IMR-90 (cell line): ENCODE measurements at regions of chr11 and their contacts with region 1.

Region 1: DNA sequence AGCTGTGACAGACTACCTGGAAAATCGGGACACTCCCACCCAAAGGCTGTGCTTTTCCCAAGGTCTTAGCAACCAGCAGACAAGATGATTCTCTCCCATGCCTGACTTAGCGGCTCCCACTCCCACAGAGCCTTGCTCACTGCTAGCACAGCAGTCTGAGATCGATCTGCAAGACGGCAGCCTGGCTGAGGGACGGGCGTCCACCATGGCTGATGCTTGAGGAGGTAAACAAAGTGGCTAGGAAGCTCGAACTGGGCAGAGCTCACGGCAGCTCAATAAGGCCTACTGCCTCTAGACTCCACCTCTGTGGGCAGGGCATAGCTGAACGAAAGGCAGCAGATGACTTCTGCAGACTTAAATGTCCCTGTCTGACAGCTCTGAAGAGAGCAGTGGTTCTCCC is 84.9 kb downstream of the SMCO4 start:
- DNase-seq: no peak
- ATAC-seq: no peak
- H3K4me3 ChIP-seq: no peak overlapping the region
- H3K27ac ChIP-seq: no peak overlapping the region
- H3K4me1 ChIP-seq: no peaks in the 10 kb centered on the region
- H3K27me3 ChIP-seq: no peaks in the 10 kb centered on the region
- CTCF ChIP-seq: no peak
- POLR2A ChIP-seq: no peak
- RAD21 ChIP-seq: no peak

Region 2: DNA sequence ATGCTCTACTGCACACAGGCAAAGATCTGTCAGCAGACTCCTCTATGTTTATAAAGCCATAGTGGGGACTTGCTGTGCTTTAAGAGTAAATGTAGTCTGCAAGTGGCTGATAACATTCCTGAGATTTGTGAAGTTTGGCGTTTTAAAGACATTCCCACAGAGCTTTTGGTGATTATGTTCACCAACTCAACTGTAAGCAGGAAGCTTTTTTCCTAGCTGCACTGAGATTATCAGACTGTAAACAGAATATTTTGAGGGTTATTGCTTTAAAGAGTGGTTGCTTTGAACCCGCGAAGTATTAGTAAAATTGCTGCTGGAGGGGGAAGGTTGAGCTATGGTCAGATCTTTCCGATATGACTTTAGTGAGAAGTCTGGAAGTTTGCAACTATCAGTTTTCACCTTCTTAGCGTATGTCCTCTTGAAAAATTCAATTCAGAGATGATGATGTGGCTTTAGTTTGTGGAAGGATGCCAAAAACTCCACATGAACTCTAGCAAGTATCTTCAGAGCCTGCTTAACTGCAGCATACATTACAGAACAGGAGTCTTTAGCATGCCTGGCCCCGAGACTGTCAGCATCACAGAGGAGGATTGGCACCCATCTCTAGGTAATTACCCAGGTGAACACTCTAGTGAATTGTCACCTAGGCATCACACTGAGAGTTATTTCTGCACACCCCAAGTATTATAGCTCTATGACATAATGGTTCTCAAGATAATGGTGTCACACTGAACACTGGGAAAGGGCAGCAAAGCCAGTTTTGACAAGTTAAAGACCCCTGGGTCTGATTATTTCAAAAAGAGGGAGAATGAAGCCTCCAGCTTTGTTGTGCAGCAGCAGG is 398.9 kb before region 1 on chr11:
- CTCF ChIA-PET with region 1: no interaction called
- POLR2A ChIA-PET with region 1: no interaction called
- dilution Hi-C with region 1: no loop called
- in situ Hi-C with region 1: no loop called
- intact Hi-C with region 1: no loop called
- DNase-seq: peak; percentile 90
- ATAC-seq: peak; percentile 54
- H3K4me3 ChIP-seq: no peak overlapping the region
- H3K27ac ChIP-seq: peak overlapping the region; percentile 61; the same call in 1 of the 2 replicates
- H3K4me1 ChIP-seq: peaks cover 16% of the 10 kb centered on the region
- H3K27me3 ChIP-seq: no peaks in the 10 kb centered on the region
- CTCF ChIP-seq: no peak
- POLR2A ChIP-seq: no peak
- RAD21 ChIP-seq: no peak

Region 3: DNA sequence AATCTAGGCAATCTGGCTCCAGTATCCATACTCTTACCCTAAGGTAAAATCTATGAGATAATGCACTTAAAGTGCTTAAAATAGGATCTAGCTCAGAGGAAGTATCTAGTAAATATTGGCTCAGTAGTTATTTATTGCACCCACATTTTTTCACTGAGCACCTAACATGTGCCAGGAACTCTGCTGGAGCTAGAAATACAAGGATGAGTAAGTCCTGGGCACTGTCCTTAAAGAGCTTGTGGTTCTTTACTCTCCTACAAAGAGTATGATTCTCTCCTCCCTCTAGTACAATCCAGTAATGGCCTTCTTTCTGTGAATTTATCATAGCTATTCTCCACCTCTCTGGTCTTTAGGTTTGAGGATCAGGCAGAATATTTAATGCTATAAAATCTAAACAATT is 68.5 kb before region 1 on chr11:
- CTCF ChIA-PET with region 1: no interaction called
- POLR2A ChIA-PET with region 1: no interaction called
- dilution Hi-C with region 1: no loop called
- in situ Hi-C with region 1: no loop called
- intact Hi-C with region 1: loop called (anchors 2 kb)
- DNase-seq: no peak
- ATAC-seq: no peak
- H3K4me3 ChIP-seq: no peak overlapping the region
- H3K27ac ChIP-seq: no peak overlapping the region
- H3K4me1 ChIP-seq: no peaks in the 10 kb centered on the region
- H3K27me3 ChIP-seq: no peaks in the 10 kb centered on the region
- CTCF ChIP-seq: no peak
- POLR2A ChIP-seq: no peak
- RAD21 ChIP-seq: no peak

Region 4: GRCh38 chr11:93500759-93501158 is 42.5 kb after region 1 on chr11:
- CTCF ChIA-PET with region 1: no interaction called
- POLR2A ChIA-PET with region 1: no interaction called
- dilution Hi-C with region 1: no loop called
- in situ Hi-C with region 1: no loop called
- intact Hi-C with region 1: no loop called
- DNase-seq: no peak
- ATAC-seq: no peak
- H3K4me3 ChIP-seq: no peak overlapping the region
- H3K27ac ChIP-seq: no peak overlapping the region
- H3K4me1 ChIP-seq: 0 out of 2 replicates have a peak, but pooled peaks cover 2% of the 10 kb centered on the region
- H3K27me3 ChIP-seq: no peaks in the 10 kb centered on the region
- CTCF ChIP-seq: no peak
- POLR2A ChIP-seq: no peak
- RAD21 ChIP-seq: no peak

Region 5: GRCh38 chr11:93718057-93718563 is 259.8 kb after region 1 on chr11:
- CTCF ChIA-PET with region 1: no interaction called
- POLR2A ChIA-PET with region 1: no interaction called
- dilution Hi-C with region 1: no loop called
- in situ Hi-C with region 1: no loop called
- intact Hi-C with region 1: no loop called
- DNase-seq: no peak
- ATAC-seq: no peak
- H3K4me3 ChIP-seq: no peak overlapping the region
- H3K27ac ChIP-seq: no peak overlapping the region
- H3K4me1 ChIP-seq: no peaks in the 10 kb centered on the region
- H3K27me3 ChIP-seq: no peaks in the 10 kb centered on the region
- CTCF ChIP-seq: no peak
- POLR2A ChIP-seq: no peak
- RAD21 ChIP-seq: no peak

Region 6: GRCh38 chr11:93917673-93918072 is 459.4 kb after region 1 on chr11:
- CTCF ChIA-PET with region 1: no interaction called
- POLR2A ChIA-PET with region 1: no interaction called
- dilution Hi-C with region 1: no loop called
- in situ Hi-C with region 1: no loop called
- intact Hi-C with region 1: no loop called
- DNase-seq: no peak
- ATAC-seq: no peak
- H3K4me3 ChIP-seq: no peak overlapping the region
- H3K27ac ChIP-seq: no peak overlapping the region
- H3K4me1 ChIP-seq: no peaks in the 10 kb centered on the region
- H3K27me3 ChIP-seq: peaks cover 5% of the 10 kb centered on the region; the same call in 1 of the 2 replicates
- CTCF ChIP-seq: no peak
- POLR2A ChIP-seq: no peak
- RAD21 ChIP-seq: no peak